ENCODE measurements at regions of chr6 and their contacts with region 1.

Region 1: GRCh38 chr6:25229671-25230321 is 49.4 kb upstream of the CARMIL1 start:
- DNase-seq: peak; percentile 34
- H3K4me3 ChIP-seq: no peak overlapping the region
- H3K27ac ChIP-seq: peak overlapping the region; percentile 33
- H3K4me1 ChIP-seq: peaks cover 11% of the 10 kb centered on the region
- H3K27me3 ChIP-seq: no peaks in the 10 kb centered on the region
- CTCF ChIP-seq: no peak

Region 2: GRCh38 chr6:25250878-25251277 is 21.1 kb after region 1 on chr6:
- CTCF ChIA-PET with region 1: no interaction called
- dilution Hi-C with region 1: no loop called
- in situ Hi-C with region 1: no loop called
- intact Hi-C with region 1: loop called (anchors 2 kb)
- DNase-seq: peak; percentile 97
- H3K4me3 ChIP-seq: no peak overlapping the region
- H3K27ac ChIP-seq: peak overlapping the region; percentile 39
- H3K4me1 ChIP-seq: peaks cover 5% of the 10 kb centered on the region
- H3K27me3 ChIP-seq: no peaks in the 10 kb centered on the region
- CTCF ChIP-seq: no peak

Region 3: GRCh38 chr6:25312703-25313501 is 83.1 kb after region 1 on chr6:
- CTCF ChIA-PET with region 1: no interaction called
- dilution Hi-C with region 1: loop called (anchors 5 kb)
- in situ Hi-C with region 1: no loop called
- intact Hi-C with region 1: no loop called
- DNase-seq: peak; percentile 77
- H3K4me3 ChIP-seq: peak overlapping the region in 2 of 3 experiments; percentile 9 to 44
- H3K27ac ChIP-seq: peak overlapping the region; percentile 80
- H3K4me1 ChIP-seq: peaks cover 33% of the 10 kb centered on the region
- H3K27me3 ChIP-seq: no peaks in the 10 kb centered on the region
- CTCF ChIP-seq: peak in 1 of 2 donors; percentile 25

Measured in mammary epithelial cell (primary cell).